Left colon (tissue), 2 donors: ENCODE measurements at regions of chr7 and their contacts with region 1.

Region 1: DNA sequence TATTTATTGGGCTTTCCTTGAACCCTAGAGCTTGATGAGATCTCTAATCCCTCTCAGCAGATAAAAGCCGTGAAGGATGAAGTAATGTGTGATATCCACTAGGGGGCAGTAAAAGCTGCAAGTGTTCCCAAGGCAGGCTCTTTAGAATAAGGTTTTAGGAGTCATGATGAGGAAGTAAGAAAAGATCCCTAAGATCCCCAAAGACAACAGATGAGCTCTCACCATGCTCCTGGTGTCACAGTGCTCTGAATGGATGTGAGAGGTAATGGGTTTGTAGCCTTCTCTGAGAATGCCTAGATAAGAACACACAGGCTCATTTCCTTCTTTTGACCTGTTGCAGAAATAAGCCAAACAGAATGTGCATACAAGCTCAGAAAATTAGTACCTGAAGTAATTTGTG is 70.4 kb upstream of the ITPRID1 start:
- DNase-seq: no peak
- ATAC-seq: peak; percentile 92

Region 2: GRCh38 chr7:31633894-31634494 is 190.5 kb after region 1 on chr7:
- intact Hi-C with region 1: loop called in 1 of 2 experiments (anchors 10 kb)
- DNase-seq: peak; percentile 44 to 48
- ATAC-seq: peak; percentile 99

Region 3: GRCh38 chr7:31735991-31736982 is 292.8 kb after region 1 on chr7:
- intact Hi-C with region 1: loop called in 1 of 2 experiments (anchors 5 kb)
- DNase-seq: peak in 1 of 2 donors; percentile 33
- ATAC-seq: peak; percentile 74